ENCODE measurements at regions of chr18 and their contacts with region 1.

Region 1: GRCh38 chr18:34787931-34788532 is 77.9 kb downstream of the DTNA start:
- DNase-seq: peak; percentile 42
- H3K4me3 ChIP-seq: no peak overlapping the region
- H3K27ac ChIP-seq: no peak overlapping the region
- H3K4me1 ChIP-seq: no peaks in the 10 kb centered on the region
- H3K27me3 ChIP-seq: no peaks in the 10 kb centered on the region
- CTCF ChIP-seq: peak; percentile 67 to 71

Region 2: DNA sequence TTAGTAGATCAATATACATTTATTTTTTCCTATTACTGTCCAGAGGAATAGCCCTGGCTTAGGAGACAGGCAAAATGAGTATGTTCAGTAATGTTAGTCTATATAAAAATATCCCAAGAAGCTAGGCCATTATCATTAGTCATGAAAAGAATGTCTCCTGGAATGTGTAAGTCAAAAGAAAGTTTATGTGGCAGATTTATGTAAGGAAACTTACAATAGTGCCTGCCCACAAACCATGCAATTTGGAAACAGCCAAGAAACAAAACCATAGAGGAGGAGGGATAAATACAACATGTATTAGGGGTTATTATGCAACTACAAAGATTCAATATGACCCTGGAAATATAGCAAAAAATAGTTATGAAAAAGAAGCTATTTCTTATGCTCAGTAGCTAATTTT is 659.6 kb before region 1 on chr18:
- CTCF ChIA-PET with region 1: interaction called, 14 read pairs
- dilution Hi-C with region 1: no loop called
- in situ Hi-C with region 1: loop called in 1 of 2 experiments (anchors 25 kb)
- intact Hi-C with region 1: no loop called
- DNase-seq: peak; percentile 1
- H3K4me3 ChIP-seq: no peak overlapping the region
- H3K27ac ChIP-seq: no peak overlapping the region
- H3K4me1 ChIP-seq: no peaks in the 10 kb centered on the region
- H3K27me3 ChIP-seq: no peaks in the 10 kb centered on the region
- CTCF ChIP-seq: no peak

Region 3: GRCh38 chr18:34352385-34353163 is 435.5 kb before region 1 on chr18:
- CTCF ChIA-PET with region 1: no interaction called
- dilution Hi-C with region 1: no loop called
- in situ Hi-C with region 1: no loop called
- intact Hi-C with region 1: loop called (anchors 2 kb)
- DNase-seq: no peak
- H3K4me3 ChIP-seq: no peak overlapping the region
- H3K27ac ChIP-seq: no peak overlapping the region
- H3K4me1 ChIP-seq: no peaks in the 10 kb centered on the region
- H3K27me3 ChIP-seq: no peaks in the 10 kb centered on the region
- CTCF ChIP-seq: peak in 1 of 2 donors; percentile 23

Region 4: GRCh38 chr18:34522603-34523002 is 265.4 kb before region 1 on chr18:
- CTCF ChIA-PET with region 1: no interaction called
- dilution Hi-C with region 1: no loop called
- in situ Hi-C with region 1: no loop called
- intact Hi-C with region 1: no loop called
- DNase-seq: no peak
- H3K4me3 ChIP-seq: no peak overlapping the region
- H3K27ac ChIP-seq: no peak overlapping the region
- H3K4me1 ChIP-seq: no peaks in the 10 kb centered on the region
- H3K27me3 ChIP-seq: no peaks in the 10 kb centered on the region
- CTCF ChIP-seq: no peak

Region 5: GRCh38 chr18:34707670-34708069 is 80.4 kb before region 1 on chr18:
- CTCF ChIA-PET with region 1: no interaction called
- dilution Hi-C with region 1: no loop called
- in situ Hi-C with region 1: no loop called
- intact Hi-C with region 1: loop called (anchors 5 kb)
- DNase-seq: peak; percentile 92
- H3K4me3 ChIP-seq: peak overlapping the region in 1 of 3 experiments; percentile 23
- H3K27ac ChIP-seq: peak overlapping the region; percentile 76
- H3K4me1 ChIP-seq: peaks cover 39% of the 10 kb centered on the region
- H3K27me3 ChIP-seq: no peaks in the 10 kb centered on the region
- CTCF ChIP-seq: no peak

Region 6: GRCh38 chr18:34718610-34719009 is 69.4 kb before region 1 on chr18:
- CTCF ChIA-PET with region 1: no interaction called
- dilution Hi-C with region 1: no loop called
- in situ Hi-C with region 1: no loop called
- intact Hi-C with region 1: no loop called
- DNase-seq: no peak
- H3K4me3 ChIP-seq: no peak overlapping the region
- H3K27ac ChIP-seq: no peak overlapping the region
- H3K4me1 ChIP-seq: no peaks in the 10 kb centered on the region
- H3K27me3 ChIP-seq: no peaks in the 10 kb centered on the region
- CTCF ChIP-seq: no peak

Region 7: GRCh38 chr18:35467624-35468016 is 679.6 kb after region 1 on chr18:
- CTCF ChIA-PET with region 1: no interaction called
- dilution Hi-C with region 1: no loop called
- in situ Hi-C with region 1: no loop called
- intact Hi-C with region 1: no loop called
- DNase-seq: no peak
- H3K4me3 ChIP-seq: no peak overlapping the region
- H3K27ac ChIP-seq: no peak overlapping the region
- H3K4me1 ChIP-seq: peaks cover 8% of the 10 kb centered on the region
- H3K27me3 ChIP-seq: no peaks in the 10 kb centered on the region
- CTCF ChIP-seq: no peak

Measured in mammary epithelial cell (primary cell).